Activated T-helper 1 cell treated with anti-CD3 and anti-CD28 coated beads, Interleukin-12 subunit alpha, Interleukin-12 subunit beta, Interleukin-2, Interleukin-4 antibody, amounts not matched to agents 30 ng/mL and 10 ng/mL and 1 ng/mL, durations not matched to agents 14 hours and 24 hours and 36 hours (primary cell): ENCODE measurements at regions of chr10 and their contacts with region 1.

Region 1: GRCh38 chr10:31707093-31708039 is 221.3 kb downstream of the ARHGAP12 start:
- DNase-seq: peak; percentile 49
- H3K4me3 Mint-ChIP-seq: peak overlapping the region; percentile 38
- H3K27ac Mint-ChIP-seq: peak overlapping the region; percentile 83
- H3K4me1 Mint-ChIP-seq: peaks cover 31% of the 10 kb centered on the region
- H3K27me3 Mint-ChIP-seq: no peaks in the 10 kb centered on the region

Region 2: GRCh38 chr10:30687698-30688219 is 1019.6 kb before region 1 on chr10:
- intact Hi-C with region 1: loop called (anchors 5 kb)
- DNase-seq: peak; percentile 63
- H3K4me3 Mint-ChIP-seq: no peak overlapping the region
- H3K27ac Mint-ChIP-seq: no peak overlapping the region
- H3K4me1 Mint-ChIP-seq: peaks cover 44% of the 10 kb centered on the region
- H3K27me3 Mint-ChIP-seq: peaks cover 5% of the 10 kb centered on the region

Region 3: GRCh38 chr10:31353574-31353973 is 353.8 kb before region 1 on chr10:
- intact Hi-C with region 1: loop called (anchors 5 kb)
- DNase-seq: no peak
- H3K4me3 Mint-ChIP-seq: no peak overlapping the region
- H3K27ac Mint-ChIP-seq: peak overlapping the region; percentile 85
- H3K4me1 Mint-ChIP-seq: peaks cover 37% of the 10 kb centered on the region
- H3K27me3 Mint-ChIP-seq: no peaks in the 10 kb centered on the region

Region 4: GRCh38 chr10:31687663-31688482 is 19.5 kb before region 1 on chr10:
- intact Hi-C with region 1: loop called (anchors 2 kb)
- DNase-seq: peak; percentile 29
- H3K4me3 Mint-ChIP-seq: no peak overlapping the region
- H3K27ac Mint-ChIP-seq: peak overlapping the region; percentile 0
- H3K4me1 Mint-ChIP-seq: peaks cover 5% of the 10 kb centered on the region
- H3K27me3 Mint-ChIP-seq: no peaks in the 10 kb centered on the region

Region 5: DNA sequence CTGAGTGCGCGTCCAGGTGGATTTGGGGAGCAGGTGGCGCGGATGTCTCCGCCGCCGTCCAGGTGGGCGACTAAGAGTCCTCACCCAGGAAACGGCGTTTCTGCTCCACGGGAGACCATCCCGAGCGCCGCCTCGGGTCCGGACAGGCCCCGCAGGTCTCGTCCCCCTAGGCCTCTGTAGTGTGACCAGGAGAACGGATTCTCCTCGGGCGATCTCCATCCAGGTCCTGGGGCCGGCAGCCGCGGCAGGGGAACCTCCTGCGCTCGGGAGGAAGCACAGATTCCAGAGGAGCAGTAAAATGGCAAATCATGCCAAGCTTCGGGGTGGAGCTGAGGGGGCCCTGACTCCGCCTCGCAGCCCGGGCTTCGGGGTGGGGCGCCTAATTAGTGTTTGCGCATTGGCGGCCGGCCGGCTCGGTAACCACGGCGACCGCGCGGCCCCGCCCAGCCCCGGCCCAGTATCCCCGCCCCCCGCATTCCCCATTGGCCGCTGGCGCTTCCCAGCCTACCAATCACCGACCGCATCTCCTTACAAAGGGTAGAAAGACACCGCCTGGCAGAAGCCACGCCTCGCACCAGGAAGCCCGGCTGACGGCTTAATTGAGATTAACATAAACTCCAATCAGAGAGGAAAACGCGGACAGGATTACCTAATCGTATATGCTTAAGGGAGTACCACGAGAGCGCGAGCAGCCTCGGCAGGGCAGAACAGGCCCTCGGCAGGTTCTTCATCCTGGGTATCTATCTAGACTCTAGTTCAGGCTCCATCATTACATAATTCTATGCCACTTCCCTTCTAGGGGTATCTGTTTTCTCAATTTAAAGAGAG is 52.6 kb after region 1 on chr10:
- intact Hi-C with region 1: loop called (anchors 1 kb)
- DNase-seq: peak; percentile 92
- H3K4me3 Mint-ChIP-seq: peak overlapping the region; percentile 83
- H3K27ac Mint-ChIP-seq: peak overlapping the region; percentile 89
- H3K4me1 Mint-ChIP-seq: peaks cover 28% of the 10 kb centered on the region
- H3K27me3 Mint-ChIP-seq: peaks cover 5% of the 10 kb centered on the region

Region 6: DNA sequence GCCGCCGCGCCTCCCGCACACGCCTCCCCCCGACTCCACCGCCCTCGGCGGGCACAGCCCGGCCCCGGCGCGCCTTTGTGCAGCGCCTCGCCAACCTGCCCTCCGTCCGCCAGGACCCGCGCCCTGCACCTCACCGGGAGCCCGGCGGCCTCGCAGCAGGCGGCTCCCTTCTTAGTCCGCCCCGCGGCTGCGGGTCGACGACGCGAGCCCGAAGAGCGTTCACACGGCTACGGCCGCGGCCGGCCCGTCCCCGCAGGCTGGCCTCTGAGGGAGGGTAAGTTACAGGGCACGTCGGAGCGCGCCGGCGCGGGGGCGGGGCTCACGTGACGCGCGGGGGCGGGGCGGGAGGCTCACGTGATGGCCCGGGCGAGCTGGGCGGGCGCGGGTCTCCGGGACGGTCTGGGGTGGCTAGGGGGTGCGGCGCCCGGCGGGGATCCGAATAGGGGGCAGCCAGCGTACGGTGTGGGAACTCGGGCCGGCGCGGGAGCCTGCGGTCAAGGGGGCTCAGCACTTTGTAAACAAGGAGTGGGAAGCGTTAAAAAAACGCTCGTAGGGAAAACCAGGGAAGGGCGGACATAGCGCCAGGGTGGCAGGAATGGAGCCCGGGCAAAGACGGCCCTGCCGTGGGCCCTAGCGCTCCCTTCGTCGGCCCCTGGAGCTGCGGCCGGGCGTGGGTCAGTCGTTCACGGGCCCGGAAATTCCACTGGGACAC is 221.3 kb after region 1 on chr10 and contains the start of gene ARHGAP12:
- intact Hi-C with region 1: loop called (anchors 5 kb)
- DNase-seq: peak; percentile 68
- H3K4me3 Mint-ChIP-seq: peak within 1 kb of the TSS; percentile 88
- H3K27ac Mint-ChIP-seq: peak within 1 kb of the TSS; percentile 73
- H3K4me1 Mint-ChIP-seq: peaks cover 56% of the 10 kb centered on the region
- H3K27me3 Mint-ChIP-seq: peaks cover 13% of the 10 kb centered on the region
- total RNA-seq, gene ARHGAP12: 2.4 and 3.5 TPM in 2 replicates